Dorsolateral prefrontal cortex (tissue), 120 donors: ENCODE measurements at regions of chr19 and their contacts with region 1.

Region 1: DNA sequence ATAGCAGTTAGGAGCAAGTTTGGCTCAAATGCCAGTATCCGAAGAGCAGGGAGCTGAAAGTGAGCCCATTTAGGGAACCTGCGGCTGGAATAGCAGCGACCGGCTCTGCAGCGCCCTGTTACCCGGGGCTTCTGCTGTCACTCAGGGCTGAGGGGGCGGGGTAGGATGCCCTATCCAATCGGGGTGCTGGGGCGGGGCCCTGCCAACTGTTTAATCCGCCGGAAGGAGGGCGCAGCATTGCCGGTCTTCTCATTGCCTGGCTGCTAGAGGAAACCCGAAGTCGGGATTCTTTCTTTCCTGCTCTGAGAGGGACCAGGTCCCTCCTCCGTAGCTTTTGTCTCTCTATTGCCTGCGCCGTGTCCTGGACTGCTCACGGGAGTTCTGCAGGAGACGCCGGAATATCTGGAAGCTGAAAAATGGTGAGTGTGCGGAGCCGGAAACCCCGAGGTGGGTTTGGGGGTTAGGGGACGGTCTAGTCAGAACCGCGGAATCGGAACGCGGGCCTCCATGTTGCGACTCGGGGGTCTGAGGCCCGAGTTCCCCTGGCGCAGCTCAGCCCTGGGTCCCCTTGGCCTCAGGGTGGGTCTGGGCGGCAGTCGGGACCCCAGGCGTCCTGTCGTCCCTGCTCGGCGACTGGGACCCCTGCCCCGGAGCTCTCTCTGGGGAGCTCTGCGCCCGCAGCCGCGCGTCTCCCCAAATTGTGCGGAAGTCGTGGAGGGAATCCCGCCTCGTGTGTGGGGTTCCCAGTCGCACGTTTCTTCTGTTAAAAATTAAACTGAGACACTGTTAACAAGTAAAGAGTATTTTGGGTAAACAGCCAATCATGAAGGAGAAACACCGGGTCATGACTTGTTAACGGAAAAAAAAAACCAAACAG is 22.8 kb downstream of the ZNF763 start:
- DNase-seq: peak; percentile 85 to 96 (median 95)
- H3K4me3 ChIP-seq: peak overlapping the region; percentile 52 to 90 (median 78)
- H3K27ac ChIP-seq: peak overlapping the region in 50 of 59 donors; percentile 3 to 87 (median 62)
- H3K27me3 ChIP-seq: no peaks in the 10 kb centered on the region
- CTCF ChIP-seq: peak in 43 of 56 donors; percentile 3 to 66 (median 39)

Region 2: DNA sequence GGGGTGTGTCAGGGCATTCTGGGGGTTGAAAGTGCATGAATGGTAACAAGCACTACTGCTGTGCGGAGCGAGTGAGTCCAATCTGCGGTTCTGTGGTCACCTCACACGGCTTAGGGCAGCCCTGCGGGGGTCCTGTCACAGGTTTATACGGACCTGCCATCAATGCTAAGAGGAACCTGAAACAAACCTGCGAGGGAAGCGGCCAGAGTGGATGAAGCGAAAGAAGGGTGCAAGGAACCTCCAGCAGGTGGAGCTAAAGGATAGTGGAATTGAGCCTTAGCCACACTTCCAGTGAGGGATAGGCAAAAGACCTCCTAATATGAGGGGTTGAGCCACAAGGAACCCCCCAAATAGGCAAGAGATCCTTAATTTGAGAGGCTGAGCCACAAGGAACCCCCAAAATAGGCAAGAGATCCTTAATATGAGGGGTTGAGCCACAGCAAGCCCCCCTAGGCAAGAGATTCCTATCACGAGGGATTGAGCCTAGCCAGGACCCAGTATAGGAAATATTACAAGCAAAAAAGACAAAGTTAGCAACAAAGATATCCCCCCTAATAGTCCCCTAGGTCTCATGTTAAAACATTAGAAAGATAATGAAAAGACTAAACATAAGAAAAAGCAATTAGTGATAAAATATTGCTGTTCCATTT is 106.4 kb before region 1 on chr19:
- intact Hi-C with region 1: loop called in 1 of 2 experiments (anchors 2 kb)
- DNase-seq: peak in 7 of 10 donors; percentile 31 to 63 (median 39)
- H3K4me3 ChIP-seq: peak overlapping the region in 9 of 59 donors; percentile 21 to 34 (median 23)
- H3K27ac ChIP-seq: no peak overlapping the region
- H3K27me3 ChIP-seq: no peaks in the 10 kb centered on the region
- CTCF ChIP-seq: peak; percentile 27 to 83 (median 66)

Region 3: GRCh38 chr19:11924886-11925650 is 62.6 kb before region 1 on chr19 and contains the start of gene ZNF700:
- intact Hi-C with region 1: loop called (anchors 1 to 2 kb)
- DNase-seq: peak; percentile 90 to 97 (median 96)
- H3K4me3 ChIP-seq: peak within 1 kb of the TSS; percentile 59 to 100 (median 94)
- H3K27ac ChIP-seq: peak within 1 kb of the TSS; percentile 65 to 97 (median 88)
- H3K27me3 ChIP-seq: no peaks in the 10 kb centered on the region
- CTCF ChIP-seq: peak in 17 of 56 donors; percentile 7 to 55 (median 24)
- total RNA-seq, gene ZNF700: 8.4 to 16.2 (median 11.6) TPM